ENCODE measurements at regions of chr5 and their contacts with region 1.

Region 1: DNA sequence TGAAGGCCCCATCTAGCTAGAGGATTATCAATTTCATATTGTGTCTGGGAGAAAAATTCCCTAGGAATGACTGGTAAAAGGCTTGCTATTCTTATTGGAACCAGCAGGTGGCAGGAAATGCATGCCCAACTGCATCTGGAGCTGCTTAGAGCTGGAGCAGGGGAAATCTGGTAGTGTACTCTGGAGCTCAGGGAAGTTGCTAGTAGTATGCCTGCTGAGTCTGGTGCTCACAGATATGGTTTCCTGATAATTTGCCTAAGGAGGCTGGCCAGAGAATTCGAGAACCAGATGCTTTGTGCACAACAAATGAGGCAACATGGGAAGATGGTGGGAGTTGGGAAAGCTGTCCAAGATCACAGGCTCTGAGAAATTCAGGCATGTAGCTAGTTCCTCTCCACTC is 53.7 kb downstream of the G3BP1 start:
- DNase-seq: peak in 4 of 5 donors; percentile 19 to 47 (median 22)
- H3K4me3 ChIP-seq: no peak overlapping the region
- H3K4me3 Mint-ChIP-seq: no peak overlapping the region
- H3K27ac ChIP-seq: no peak overlapping the region
- H3K27ac Mint-ChIP-seq: peak overlapping the region in 1 of 8 donors; percentile 13
- H3K4me1 ChIP-seq: no peaks in the 10 kb centered on the region
- H3K4me1 Mint-ChIP-seq: peaks cover 6 to 10% (median 7%) of the 10 kb centered on the region in 3 donors
- H3K27me3 ChIP-seq: no peaks in the 10 kb centered on the region
- H3K27me3 Mint-ChIP-seq: no peaks in the 10 kb centered on the region

Region 2: GRCh38 chr5:151347364-151347763 is 478.1 kb before region 1 on chr5 and contains the start of gene SLC36A2:
- CTCF ChIA-PET with region 1: no interaction called
- POLR2A ChIA-PET with region 1: no interaction called
- DNase-seq: no peak
- H3K4me3 ChIP-seq: no peak within 1 kb of the TSS
- H3K4me3 Mint-ChIP-seq: no peak within 1 kb of the TSS
- H3K27ac ChIP-seq: no peak within 1 kb of the TSS
- H3K27ac Mint-ChIP-seq: no peak within 1 kb of the TSS
- H3K4me1 ChIP-seq: no peaks in the 10 kb centered on the region
- H3K4me1 Mint-ChIP-seq: no peaks in the 10 kb centered on the region
- H3K27me3 ChIP-seq: no peaks in the 10 kb centered on the region
- H3K27me3 Mint-ChIP-seq: peaks cover 26 to 73% of the 10 kb centered on the region in 2 donors
- total RNA-seq, gene SLC36A2: not detected

Region 3: DNA sequence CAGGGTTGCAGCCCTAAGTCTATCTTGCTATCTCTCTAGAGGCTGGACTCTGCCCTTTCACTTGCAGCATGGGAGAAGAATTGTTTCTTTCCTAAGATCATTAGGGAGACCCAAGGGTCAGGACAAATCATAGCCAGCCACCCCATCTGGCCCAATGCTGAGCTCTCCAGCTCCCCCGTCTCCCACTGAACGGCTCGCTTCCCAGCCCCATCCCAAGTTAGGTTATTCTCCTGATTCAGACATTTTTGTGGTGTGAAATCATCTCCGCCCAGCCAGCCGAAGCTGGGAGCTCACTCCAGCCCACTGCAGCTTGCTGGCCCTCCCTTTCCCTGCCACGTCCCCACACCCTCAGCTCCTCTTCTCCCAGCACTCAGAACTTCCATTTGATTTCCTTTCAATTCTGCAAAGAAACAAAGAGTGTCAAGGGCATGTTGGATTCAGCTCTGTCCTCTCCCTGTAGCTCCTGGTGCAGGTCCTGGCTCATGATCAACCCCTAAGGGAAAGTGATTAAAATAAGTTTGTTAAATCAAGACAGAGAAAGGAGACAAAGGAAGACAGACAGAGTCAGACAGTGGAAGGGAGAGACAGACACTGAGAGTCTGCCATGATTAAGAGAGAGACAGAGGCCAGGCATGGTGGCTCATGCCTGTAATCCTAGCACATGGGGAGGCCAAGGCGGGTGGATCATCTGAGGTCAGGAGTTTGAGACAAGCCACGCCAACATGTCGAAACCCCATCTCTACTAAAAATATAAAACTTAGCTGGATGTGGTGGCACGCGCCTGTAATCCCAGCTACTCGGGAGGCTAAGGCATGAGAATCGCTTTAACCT is 126.2 kb before region 1 on chr5:
- CTCF ChIA-PET with region 1: no interaction called
- POLR2A ChIA-PET with region 1: no interaction called
- DNase-seq: no peak
- H3K4me3 ChIP-seq: no peak overlapping the region
- H3K4me3 Mint-ChIP-seq: no peak overlapping the region
- H3K27ac ChIP-seq: no peak overlapping the region
- H3K27ac Mint-ChIP-seq: no peak overlapping the region
- H3K4me1 ChIP-seq: no peaks in the 10 kb centered on the region
- H3K4me1 Mint-ChIP-seq: no peaks in the 10 kb centered on the region
- H3K27me3 ChIP-seq: no peaks in the 10 kb centered on the region
- H3K27me3 Mint-ChIP-seq: peaks cover 5 to 13% of the 10 kb centered on the region in 2 donors

Region 4: GRCh38 chr5:152072091-152072490 is 246.6 kb after region 1 on chr5:
- CTCF ChIA-PET with region 1: no interaction called
- POLR2A ChIA-PET with region 1: interaction called, 14 read pairs
- DNase-seq: no peak
- H3K4me3 ChIP-seq: no peak overlapping the region
- H3K4me3 Mint-ChIP-seq: no peak overlapping the region
- H3K27ac ChIP-seq: no peak overlapping the region
- H3K27ac Mint-ChIP-seq: no peak overlapping the region
- H3K4me1 ChIP-seq: no peaks in the 10 kb centered on the region
- H3K4me1 Mint-ChIP-seq: peaks cover 0 to 1% (median 0%) of the 10 kb centered on the region in 3 donors
- H3K27me3 ChIP-seq: no peaks in the 10 kb centered on the region
- H3K27me3 Mint-ChIP-seq: peaks cover 2 to 20% of the 10 kb centered on the region in 2 donors

Region 5: DNA sequence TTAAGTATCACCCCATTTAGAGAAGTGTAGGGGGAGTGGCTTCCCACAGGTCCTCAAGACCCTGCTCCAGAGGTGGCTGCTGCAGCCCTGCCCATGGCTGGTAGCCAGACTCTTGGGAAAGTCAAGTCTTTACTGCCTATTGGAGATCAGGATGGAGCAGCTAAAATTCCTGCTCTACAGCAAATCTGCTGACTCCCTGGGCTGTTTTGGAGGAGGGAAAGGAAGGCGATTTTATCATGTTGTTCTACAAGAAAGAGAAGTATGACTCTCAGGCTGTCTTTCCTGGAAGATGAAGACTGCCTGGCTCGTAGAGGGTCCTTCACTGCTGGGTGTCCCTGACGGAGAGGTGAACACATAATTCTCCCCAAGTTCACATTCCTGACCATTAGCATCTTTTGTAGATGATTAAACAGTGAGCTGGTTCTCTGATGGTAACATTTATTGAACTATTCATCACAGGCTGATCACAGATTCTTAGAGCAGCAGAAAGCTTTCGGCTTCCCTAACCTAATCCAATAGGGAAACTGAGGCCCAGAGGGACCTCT is 311.5 kb after region 1 on chr5:
- CTCF ChIA-PET with region 1: interaction called, 147 read pairs
- POLR2A ChIA-PET with region 1: no interaction called
- DNase-seq: no peak
- H3K4me3 ChIP-seq: no peak overlapping the region
- H3K4me3 Mint-ChIP-seq: no peak overlapping the region
- H3K27ac ChIP-seq: no peak overlapping the region
- H3K27ac Mint-ChIP-seq: no peak overlapping the region
- H3K4me1 ChIP-seq: no peaks in the 10 kb centered on the region
- H3K4me1 Mint-ChIP-seq: no peaks in the 10 kb centered on the region
- H3K27me3 ChIP-seq: no peaks in the 10 kb centered on the region
- H3K27me3 Mint-ChIP-seq: peaks cover 0 to 9% of the 10 kb centered on the region in 2 donors

Region 6: GRCh38 chr5:152142840-152143469 is 317.5 kb after region 1 on chr5:
- CTCF ChIA-PET with region 1: interaction called, 147 read pairs
- POLR2A ChIA-PET with region 1: no interaction called
- DNase-seq: peak; percentile 30 to 65 (median 43)
- H3K4me3 ChIP-seq: no peak overlapping the region
- H3K4me3 Mint-ChIP-seq: no peak overlapping the region
- H3K27ac ChIP-seq: no peak overlapping the region
- H3K27ac Mint-ChIP-seq: peak overlapping the region in 1 of 8 donors; percentile 39
- H3K4me1 ChIP-seq: no peaks in the 10 kb centered on the region
- H3K4me1 Mint-ChIP-seq: no peaks in the 10 kb centered on the region
- H3K27me3 ChIP-seq: no peaks in the 10 kb centered on the region
- H3K27me3 Mint-ChIP-seq: peaks cover 0 to 4% of the 10 kb centered on the region in 2 donors

Measured in CD8-positive, alpha-beta memory T cell (primary cell).